ENCODE measurements at regions of chr5 and their contacts with region 1.

Region 1: GRCh38 chr5:148532962-148533670 is 121.2 kb downstream of the HTR4 start:
- DNase-seq: no peak
- H3K4me3 ChIP-seq: no peak overlapping the region
- H3K27ac ChIP-seq: no peak overlapping the region
- H3K4me1 ChIP-seq: no peaks in the 10 kb centered on the region
- H3K27me3 ChIP-seq: peaks cover 8% of the 10 kb centered on the region
- CTCF ChIP-seq: no peak

Region 2: DNA sequence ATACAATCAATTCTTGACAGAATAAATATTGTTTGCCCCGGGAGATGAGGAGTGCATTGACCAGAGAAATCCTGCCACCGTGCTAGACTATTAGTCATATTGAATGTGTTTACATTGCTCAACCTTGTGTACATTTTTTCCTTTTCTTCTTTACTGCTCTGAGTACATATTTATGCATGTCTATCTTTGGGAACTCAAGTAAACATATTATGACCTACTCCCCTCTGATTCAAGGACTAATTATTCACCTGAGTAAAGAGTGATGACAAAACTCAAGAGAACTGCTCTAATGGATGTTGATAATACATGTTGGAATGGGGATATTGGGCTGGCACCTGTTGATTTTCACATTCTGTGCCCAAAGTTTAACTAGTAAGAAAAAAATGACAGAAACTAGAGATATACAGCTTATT is 697.7 kb before region 1 on chr5:
- CTCF ChIA-PET with region 1: no interaction called
- POLR2A ChIA-PET with region 1: no interaction called
- intact Hi-C with region 1: no loop called
- DNase-seq: peak in 1 of 2 experiments; percentile 89
- H3K4me3 ChIP-seq: no peak overlapping the region
- H3K27ac ChIP-seq: no peak overlapping the region
- H3K4me1 ChIP-seq: peaks cover 18% of the 10 kb centered on the region
- H3K27me3 ChIP-seq: peaks cover 16% of the 10 kb centered on the region
- CTCF ChIP-seq: no peak

Region 3: DNA sequence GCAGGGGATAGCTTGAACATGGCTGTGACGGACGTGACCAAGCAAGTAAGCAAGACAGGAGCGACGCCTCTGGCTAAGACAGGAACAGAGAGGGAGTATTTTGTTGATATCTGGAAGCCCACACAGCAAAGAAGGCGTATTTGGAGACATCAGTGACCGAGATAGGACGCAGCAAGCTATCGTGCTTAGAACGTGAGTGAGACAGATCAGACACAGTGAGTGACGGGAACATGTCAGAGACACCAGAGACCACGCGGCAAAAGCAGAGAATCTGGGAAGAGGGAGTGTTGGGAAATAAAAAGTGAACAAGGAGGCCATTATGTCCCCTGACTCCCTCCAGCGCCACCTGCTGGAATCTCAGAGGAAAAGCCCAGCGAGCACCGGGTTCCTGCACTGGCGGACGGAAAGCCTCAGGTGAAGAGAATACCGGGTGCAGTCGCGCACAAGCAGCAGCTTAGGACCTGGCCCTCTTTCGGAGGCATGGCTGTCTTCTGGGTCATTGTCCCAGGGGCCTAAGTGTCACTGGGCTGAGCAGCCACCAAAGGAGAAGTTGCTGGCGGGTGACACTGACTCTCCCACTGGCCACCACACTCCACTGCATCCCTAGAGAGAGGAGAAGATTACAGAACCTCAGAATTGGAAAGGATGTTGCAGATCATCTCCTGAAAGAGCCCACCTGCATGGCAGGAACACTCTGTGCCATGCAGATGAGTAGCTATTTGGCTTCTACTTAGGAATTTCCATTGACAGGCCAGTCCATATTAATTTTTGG is 50.2 kb before region 1 on chr5:
- CTCF ChIA-PET with region 1: interaction called, 11 read pairs
- POLR2A ChIA-PET with region 1: no interaction called
- intact Hi-C with region 1: no loop called
- DNase-seq: peak in 1 of 2 experiments; percentile 46
- H3K4me3 ChIP-seq: no peak overlapping the region
- H3K27ac ChIP-seq: no peak overlapping the region
- H3K4me1 ChIP-seq: no peaks in the 10 kb centered on the region
- H3K27me3 ChIP-seq: no peaks in the 10 kb centered on the region
- CTCF ChIP-seq: peak; percentile 44; the same call in 1 of the 2 replicates

Measured in PC-9 (cell line).